CD8-positive, alpha-beta T cell (primary cell): ENCODE measurements at regions of chr15 and their contacts with region 1.

Region 1: DNA sequence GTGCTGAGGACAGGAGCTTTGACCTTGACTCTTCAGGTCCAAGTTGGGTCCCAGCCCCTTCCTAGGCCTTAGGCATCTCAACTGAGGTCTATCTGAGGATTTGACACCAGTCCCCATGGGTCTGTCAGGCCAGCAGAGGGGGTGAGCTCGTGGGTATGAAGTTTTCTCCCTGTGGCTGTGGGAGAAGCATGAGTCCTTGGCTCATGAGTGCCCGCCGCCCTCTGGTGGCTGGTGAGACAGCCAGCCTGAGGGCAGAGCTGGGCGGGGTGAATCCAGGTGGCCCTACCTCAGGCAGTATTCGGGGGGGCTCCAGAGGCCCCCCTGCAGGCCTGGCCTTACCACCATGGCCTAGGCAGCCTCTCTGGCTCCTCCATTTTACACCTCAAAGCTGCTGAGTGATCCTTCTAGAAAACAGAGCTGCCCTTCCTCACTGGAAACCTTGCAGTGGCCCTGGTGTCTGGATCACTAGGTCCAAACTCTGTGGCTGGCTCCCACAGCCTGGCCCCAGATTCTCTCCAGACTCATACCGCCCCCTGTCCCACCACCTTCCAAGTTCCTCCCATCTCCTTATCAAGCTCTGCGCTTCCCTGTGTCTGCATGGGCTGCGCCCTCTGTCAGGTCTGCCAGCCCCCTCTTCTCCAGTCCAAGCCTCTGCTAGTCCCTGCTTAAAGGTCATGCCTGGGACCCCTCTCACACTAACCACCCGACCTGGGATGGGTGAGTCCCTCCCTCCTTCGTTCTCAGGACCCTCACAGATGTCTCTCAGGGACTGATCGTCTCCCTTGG is 16.1 kb downstream of the SH2D7 start:
- DNase-seq: peak; percentile 69 to 92 (median 85)
- ATAC-seq: peak; percentile 79
- H3K4me3 ChIP-seq: no peak overlapping the region
- H3K4me3 Mint-ChIP-seq: no peak overlapping the region
- H3K27ac ChIP-seq: no peak overlapping the region
- H3K27ac Mint-ChIP-seq: no peak overlapping the region
- H3K4me1 ChIP-seq: peaks cover 34% of the 10 kb centered on the region
- H3K4me1 Mint-ChIP-seq: peaks cover 35% of the 10 kb centered on the region
- H3K27me3 ChIP-seq: no peaks in the 10 kb centered on the region
- H3K27me3 Mint-ChIP-seq: no peaks in the 10 kb centered on the region
- CTCF ChIP-seq: peak; percentile 80

Region 2: GRCh38 chr15:77224352-77224751 is 884.1 kb before region 1 on chr15:
- CTCF ChIA-PET with region 1: no interaction called
- POLR2A ChIA-PET with region 1: no interaction called
- intact Hi-C with region 1: no loop called
- DNase-seq: peak in 1 of 9 experiments; percentile 5
- ATAC-seq: no peak
- H3K4me3 ChIP-seq: no peak overlapping the region
- H3K4me3 Mint-ChIP-seq: no peak overlapping the region
- H3K27ac ChIP-seq: no peak overlapping the region
- H3K27ac Mint-ChIP-seq: no peak overlapping the region
- H3K4me1 ChIP-seq: peaks cover 8% of the 10 kb centered on the region
- H3K4me1 Mint-ChIP-seq: peaks cover 18% of the 10 kb centered on the region
- H3K27me3 ChIP-seq: no peaks in the 10 kb centered on the region
- H3K27me3 Mint-ChIP-seq: no peaks in the 10 kb centered on the region
- CTCF ChIP-seq: no peak

Region 3: DNA sequence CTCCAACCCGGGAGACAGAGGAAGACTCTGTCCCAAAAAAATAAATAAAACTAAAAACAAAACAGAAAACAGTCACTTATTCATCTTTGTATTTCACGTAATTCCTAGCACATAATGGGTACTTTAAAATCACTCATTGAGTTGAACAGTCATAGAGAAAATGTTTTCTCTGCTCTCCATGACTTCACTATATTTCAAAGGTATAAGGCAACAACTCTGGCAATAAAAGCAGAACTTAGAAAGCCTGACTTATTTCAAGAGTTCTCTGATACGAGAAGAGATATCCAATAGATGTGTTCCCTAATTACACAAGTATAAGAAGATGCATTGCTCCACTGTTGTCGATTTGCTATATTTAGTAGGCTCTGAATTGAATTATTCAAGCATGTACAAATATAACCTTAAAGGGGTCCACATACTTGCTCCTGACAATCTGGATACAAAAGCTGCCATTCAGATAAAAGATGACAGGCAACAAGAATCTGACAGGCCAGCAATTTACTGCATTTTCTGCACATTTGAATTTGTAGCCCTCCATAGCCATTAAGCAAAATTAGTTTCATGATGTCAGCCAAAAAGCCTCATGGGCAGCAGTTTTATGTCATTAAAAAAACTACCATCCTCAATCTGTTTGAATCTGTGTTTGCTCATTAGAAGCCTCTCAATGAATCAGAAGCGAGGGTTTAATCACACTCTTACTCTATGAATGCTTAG is 736.5 kb before region 1 on chr15:
- CTCF ChIA-PET with region 1: no interaction called
- POLR2A ChIA-PET with region 1: no interaction called
- intact Hi-C with region 1: no loop called
- DNase-seq: no peak
- ATAC-seq: no peak
- H3K4me3 ChIP-seq: no peak overlapping the region
- H3K4me3 Mint-ChIP-seq: no peak overlapping the region
- H3K27ac ChIP-seq: no peak overlapping the region
- H3K27ac Mint-ChIP-seq: no peak overlapping the region
- H3K4me1 ChIP-seq: no peaks in the 10 kb centered on the region
- H3K4me1 Mint-ChIP-seq: peaks cover 4% of the 10 kb centered on the region
- H3K27me3 ChIP-seq: no peaks in the 10 kb centered on the region
- H3K27me3 Mint-ChIP-seq: no peaks in the 10 kb centered on the region
- CTCF ChIP-seq: no peak

Region 4: GRCh38 chr15:77959432-77959879 is 149.0 kb before region 1 on chr15:
- CTCF ChIA-PET with region 1: interaction called, 203 read pairs
- POLR2A ChIA-PET with region 1: no interaction called
- intact Hi-C with region 1: loop called (anchors 1 kb)
- DNase-seq: peak; percentile 55 to 86 (median 73)
- ATAC-seq: peak; percentile 100
- H3K4me3 ChIP-seq: no peak overlapping the region
- H3K4me3 Mint-ChIP-seq: no peak overlapping the region
- H3K27ac ChIP-seq: no peak overlapping the region
- H3K27ac Mint-ChIP-seq: no peak overlapping the region
- H3K4me1 ChIP-seq: peaks cover 3% of the 10 kb centered on the region
- H3K4me1 Mint-ChIP-seq: no peaks in the 10 kb centered on the region
- H3K27me3 ChIP-seq: no peaks in the 10 kb centered on the region
- H3K27me3 Mint-ChIP-seq: peaks cover 2% of the 10 kb centered on the region
- CTCF ChIP-seq: peak; percentile 97

Region 5: GRCh38 chr15:78018946-78019644 is 89.4 kb before region 1 on chr15:
- CTCF ChIA-PET with region 1: interaction called, 14 read pairs
- POLR2A ChIA-PET with region 1: no interaction called
- intact Hi-C with region 1: no loop called
- DNase-seq: peak in 5 of 9 experiments; percentile 17 to 61 (median 37)
- ATAC-seq: peak; percentile 83
- H3K4me3 ChIP-seq: no peak overlapping the region
- H3K4me3 Mint-ChIP-seq: no peak overlapping the region
- H3K27ac ChIP-seq: no peak overlapping the region
- H3K27ac Mint-ChIP-seq: peak overlapping the region; percentile 47
- H3K4me1 ChIP-seq: peaks cover 6% of the 10 kb centered on the region
- H3K4me1 Mint-ChIP-seq: peaks cover 23% of the 10 kb centered on the region
- H3K27me3 ChIP-seq: no peaks in the 10 kb centered on the region
- H3K27me3 Mint-ChIP-seq: no peaks in the 10 kb centered on the region
- CTCF ChIP-seq: no peak

Region 6: GRCh38 chr15:78065284-78065872 is 43.1 kb before region 1 on chr15:
- CTCF ChIA-PET with region 1: interaction called, 13 read pairs
- POLR2A ChIA-PET with region 1: interaction called, 3 read pairs
- intact Hi-C with region 1: no loop called
- DNase-seq: peak in 2 of 9 experiments; percentile 37 to 56
- ATAC-seq: no peak
- H3K4me3 ChIP-seq: peak overlapping the region; percentile 9 to 14
- H3K4me3 Mint-ChIP-seq: no peak overlapping the region
- H3K27ac ChIP-seq: peak overlapping the region; percentile 1 to 87
- H3K27ac Mint-ChIP-seq: no peak overlapping the region
- H3K4me1 ChIP-seq: peaks cover 87% of the 10 kb centered on the region
- H3K4me1 Mint-ChIP-seq: peaks cover 21% of the 10 kb centered on the region
- H3K27me3 ChIP-seq: no peaks in the 10 kb centered on the region
- H3K27me3 Mint-ChIP-seq: no peaks in the 10 kb centered on the region
- CTCF ChIP-seq: no peak

Region 7: DNA sequence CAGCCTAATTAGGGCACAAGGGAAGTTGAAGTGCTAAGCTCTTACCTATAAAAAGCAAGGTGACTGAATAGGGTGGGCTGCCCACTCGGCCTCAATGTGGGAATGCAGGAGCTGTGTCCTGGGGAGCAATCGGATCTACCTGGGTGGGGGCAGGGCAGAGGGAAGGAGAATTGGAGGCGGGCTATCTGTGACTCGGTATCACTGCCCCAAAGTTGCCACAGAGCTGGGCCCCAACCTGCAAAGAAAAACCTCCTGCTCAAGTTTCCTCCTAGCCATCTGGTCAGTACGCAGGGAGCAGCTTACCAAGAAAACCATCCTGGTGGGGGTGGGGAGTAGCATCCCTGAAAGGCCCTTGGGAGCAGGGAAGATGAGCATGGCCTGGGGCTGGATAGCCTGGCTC is 12.0 kb after region 1 on chr15:
- CTCF ChIA-PET with region 1: interaction called, 28 read pairs
- POLR2A ChIA-PET with region 1: no interaction called
- intact Hi-C with region 1: no loop called
- DNase-seq: no peak
- ATAC-seq: no peak
- H3K4me3 ChIP-seq: no peak overlapping the region
- H3K4me3 Mint-ChIP-seq: no peak overlapping the region
- H3K27ac ChIP-seq: no peak overlapping the region
- H3K27ac Mint-ChIP-seq: no peak overlapping the region
- H3K4me1 ChIP-seq: no peaks in the 10 kb centered on the region
- H3K4me1 Mint-ChIP-seq: no peaks in the 10 kb centered on the region
- H3K27me3 ChIP-seq: no peaks in the 10 kb centered on the region
- H3K27me3 Mint-ChIP-seq: no peaks in the 10 kb centered on the region
- CTCF ChIP-seq: no peak

Region 8: GRCh38 chr15:78241007-78241406 is 132.5 kb after region 1 on chr15:
- CTCF ChIA-PET with region 1: interaction called, 177 read pairs
- POLR2A ChIA-PET with region 1: interaction called, 3 read pairs
- intact Hi-C with region 1: loop called (anchors 1 kb)
- DNase-seq: peak; percentile 65 to 90 (median 81)
- ATAC-seq: peak; percentile 96
- H3K4me3 ChIP-seq: no peak overlapping the region
- H3K4me3 Mint-ChIP-seq: no peak overlapping the region
- H3K27ac ChIP-seq: no peak overlapping the region
- H3K27ac Mint-ChIP-seq: no peak overlapping the region
- H3K4me1 ChIP-seq: no peaks in the 10 kb centered on the region
- H3K4me1 Mint-ChIP-seq: peaks cover 1% of the 10 kb centered on the region
- H3K27me3 ChIP-seq: peaks cover 0 to 3% of the 10 kb centered on the region in 2 experiments
- H3K27me3 Mint-ChIP-seq: no peaks in the 10 kb centered on the region
- CTCF ChIP-seq: peak; percentile 79

Region 9: DNA sequence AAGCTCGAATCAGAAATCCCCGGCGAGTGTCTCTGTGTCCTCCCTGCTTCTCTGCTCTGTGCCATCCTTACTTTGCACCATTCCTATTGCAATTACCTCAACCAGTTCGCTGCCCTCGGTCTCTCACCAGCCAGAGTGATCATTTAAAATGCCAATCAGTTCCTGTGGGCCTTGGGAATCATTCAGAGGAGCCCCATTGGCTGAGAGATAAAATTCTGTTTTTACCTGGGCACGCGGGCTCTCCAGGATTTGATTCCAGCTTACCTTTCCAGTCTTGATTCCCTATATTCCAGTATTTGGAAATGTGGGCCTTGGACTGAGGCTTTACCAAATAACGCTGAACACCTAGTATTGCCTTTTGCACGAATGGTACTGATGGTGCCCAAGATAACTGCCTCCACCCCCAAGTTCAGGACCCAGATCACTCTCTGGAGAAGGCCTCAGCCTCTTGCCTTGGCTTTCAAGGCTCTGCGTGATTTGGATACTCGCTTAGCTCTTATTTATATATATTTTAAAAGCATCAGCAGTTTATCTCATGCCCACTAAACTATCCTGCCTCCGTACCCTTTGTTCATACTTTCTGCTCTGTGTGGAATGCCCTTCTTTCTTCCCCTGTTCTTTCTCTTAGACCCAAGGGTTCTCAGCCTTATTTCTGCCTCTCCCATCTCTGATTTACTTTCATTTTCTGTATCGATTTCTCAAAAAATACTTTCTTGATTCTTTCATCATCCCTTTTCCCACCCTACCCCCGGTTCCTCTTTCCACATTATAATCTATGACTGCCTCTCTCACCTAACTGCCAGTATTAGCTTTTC is 432.6 kb after region 1 on chr15:
- CTCF ChIA-PET with region 1: no interaction called
- POLR2A ChIA-PET with region 1: no interaction called
- intact Hi-C with region 1: no loop called
- DNase-seq: peak in 2 of 9 experiments; percentile 26 to 49
- ATAC-seq: no peak
- H3K4me3 ChIP-seq: peak overlapping the region; percentile 85 to 96
- H3K4me3 Mint-ChIP-seq: peak overlapping the region; percentile 88
- H3K27ac ChIP-seq: peak overlapping the region; percentile 89 to 97
- H3K27ac Mint-ChIP-seq: peak overlapping the region; percentile 95
- H3K4me1 ChIP-seq: peaks cover 28% of the 10 kb centered on the region
- H3K4me1 Mint-ChIP-seq: peaks cover 35% of the 10 kb centered on the region
- H3K27me3 ChIP-seq: no peaks in the 10 kb centered on the region
- H3K27me3 Mint-ChIP-seq: no peaks in the 10 kb centered on the region
- CTCF ChIP-seq: no peak